ENCODE measurements at regions of chr1 and their contacts with region 1.

Region 1: GRCh38 chr1:243850452-243851256 is 611 bp upstream of the AKT3 start:
- DNase-seq: peak; percentile 89
- H3K4me3 Mint-ChIP-seq: peak overlapping the region; percentile 79
- H3K27ac Mint-ChIP-seq: peak overlapping the region; percentile 84
- H3K4me1 Mint-ChIP-seq: peaks cover 32% of the 10 kb centered on the region
- H3K27me3 Mint-ChIP-seq: no peaks in the 10 kb centered on the region

Region 2: DNA sequence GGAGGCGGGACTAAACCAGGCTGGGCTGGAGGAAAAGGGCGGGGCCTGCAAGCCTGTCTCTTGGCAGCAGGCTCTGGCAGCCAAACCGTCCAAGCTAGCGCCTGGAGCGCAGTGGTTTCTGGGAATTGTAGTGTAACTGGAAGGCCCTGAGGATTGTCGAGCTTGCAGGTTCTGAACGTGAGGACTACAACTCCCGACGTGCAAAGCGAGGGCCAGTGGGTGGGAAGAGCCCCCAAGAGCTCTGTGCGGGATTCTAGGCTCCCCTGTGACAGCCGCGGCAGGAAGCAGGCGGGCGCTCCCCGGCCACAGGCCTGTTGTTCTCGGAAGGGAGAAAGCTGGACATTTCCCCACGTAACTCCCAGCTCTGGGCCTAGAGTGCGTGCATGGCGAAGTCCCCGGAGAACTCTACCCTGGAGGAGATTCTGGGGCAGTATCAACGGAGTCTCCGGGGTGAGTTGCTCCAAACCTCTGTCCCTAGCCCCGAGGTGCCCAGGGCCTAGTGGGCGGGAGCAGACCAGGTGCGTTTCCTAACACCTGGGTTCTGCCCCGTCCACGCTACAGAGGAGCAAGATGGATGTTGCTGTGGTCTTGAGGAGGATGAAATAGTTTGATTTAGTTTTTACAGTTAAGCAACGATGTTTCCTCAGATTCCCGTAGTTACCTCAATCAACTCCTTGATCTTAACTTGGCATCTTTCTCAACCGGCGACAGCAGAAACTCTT is 594.7 kb before region 1 on chr1 and contains the start of gene SDCCAG8:
- CTCF ChIA-PET with region 1: no interaction called
- POLR2A ChIA-PET with region 1: no interaction called
- intact Hi-C with region 1: loop called (anchors 1 kb)
- DNase-seq: peak; percentile 97
- H3K4me3 Mint-ChIP-seq: peak within 1 kb of the TSS; percentile 95
- H3K27ac Mint-ChIP-seq: peak within 1 kb of the TSS; percentile 100
- H3K4me1 Mint-ChIP-seq: peaks cover 40% of the 10 kb centered on the region
- H3K27me3 Mint-ChIP-seq: peaks cover 3% of the 10 kb centered on the region
- total RNA-seq, gene SDCCAG8: 20.7 to 23.2 TPM

Region 3: GRCh38 chr1:243421784-243422183 is 428.9 kb before region 1 on chr1:
- CTCF ChIA-PET with region 1: no interaction called
- POLR2A ChIA-PET with region 1: no interaction called
- intact Hi-C with region 1: loop called (anchors 10 kb)
- DNase-seq: peak; percentile 77
- H3K4me3 Mint-ChIP-seq: peak overlapping the region; percentile 49
- H3K27ac Mint-ChIP-seq: peak overlapping the region; percentile 5
- H3K4me1 Mint-ChIP-seq: peaks cover 23% of the 10 kb centered on the region
- H3K27me3 Mint-ChIP-seq: no peaks in the 10 kb centered on the region

Region 4: DNA sequence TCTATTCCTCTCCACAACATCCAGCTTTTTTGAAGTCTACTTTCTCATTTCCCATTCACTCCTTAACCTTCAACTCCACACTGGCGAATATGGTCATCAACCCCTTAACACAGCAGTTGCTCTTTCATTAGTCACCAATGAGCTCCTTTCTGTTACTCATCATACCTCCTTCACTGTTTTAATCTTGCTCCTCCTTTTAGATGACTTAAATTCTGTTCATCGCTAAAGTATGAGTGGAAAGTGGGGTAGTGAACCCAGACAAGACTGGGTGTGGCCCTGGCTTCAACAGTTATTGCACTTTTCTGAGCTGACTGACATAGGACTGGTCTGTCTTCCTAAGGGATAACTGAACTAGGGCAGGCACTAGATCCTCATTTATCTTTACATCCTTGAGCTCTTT is 51.9 kb before region 1 on chr1:
- CTCF ChIA-PET with region 1: no interaction called
- POLR2A ChIA-PET with region 1: no interaction called
- intact Hi-C with region 1: no loop called
- DNase-seq: peak; percentile 17
- H3K4me3 Mint-ChIP-seq: no peak overlapping the region
- H3K27ac Mint-ChIP-seq: no peak overlapping the region
- H3K4me1 Mint-ChIP-seq: peaks cover 35% of the 10 kb centered on the region
- H3K27me3 Mint-ChIP-seq: no peaks in the 10 kb centered on the region

Region 5: DNA sequence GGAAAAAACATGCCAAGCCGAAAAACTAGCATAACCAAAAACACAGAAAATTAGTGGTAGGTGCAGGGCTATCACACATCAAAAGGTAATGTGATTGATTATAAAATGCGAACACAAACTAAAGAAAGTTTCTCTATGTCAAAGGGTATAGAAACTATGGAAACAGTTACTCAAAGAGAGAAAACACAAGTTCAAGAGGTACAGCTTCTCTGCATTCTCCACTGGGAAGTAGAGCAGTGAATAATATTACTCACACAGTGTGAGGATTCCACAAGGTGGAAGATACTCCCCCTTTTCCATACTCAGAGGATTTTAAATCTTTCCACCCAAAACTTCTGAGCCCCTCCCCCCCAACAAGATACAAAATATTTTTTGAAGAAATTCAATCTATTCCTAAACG is 19.2 kb before region 1 on chr1:
- CTCF ChIA-PET with region 1: no interaction called
- POLR2A ChIA-PET with region 1: no interaction called
- intact Hi-C with region 1: loop called (anchors 2 kb)
- DNase-seq: no peak
- H3K4me3 Mint-ChIP-seq: no peak overlapping the region
- H3K27ac Mint-ChIP-seq: no peak overlapping the region
- H3K4me1 Mint-ChIP-seq: peaks cover 34% of the 10 kb centered on the region
- H3K27me3 Mint-ChIP-seq: no peaks in the 10 kb centered on the region

Region 6: GRCh38 chr1:243917177-243917862 is 66.7 kb after region 1 on chr1:
- CTCF ChIA-PET with region 1: no interaction called
- POLR2A ChIA-PET with region 1: no interaction called
- intact Hi-C with region 1: loop called (anchors 5 kb)
- DNase-seq: peak; percentile 32
- H3K4me3 Mint-ChIP-seq: peak overlapping the region; percentile 69
- H3K27ac Mint-ChIP-seq: no peak overlapping the region
- H3K4me1 Mint-ChIP-seq: peaks cover 18% of the 10 kb centered on the region
- H3K27me3 Mint-ChIP-seq: peaks cover 41% of the 10 kb centered on the region

Region 7: DNA sequence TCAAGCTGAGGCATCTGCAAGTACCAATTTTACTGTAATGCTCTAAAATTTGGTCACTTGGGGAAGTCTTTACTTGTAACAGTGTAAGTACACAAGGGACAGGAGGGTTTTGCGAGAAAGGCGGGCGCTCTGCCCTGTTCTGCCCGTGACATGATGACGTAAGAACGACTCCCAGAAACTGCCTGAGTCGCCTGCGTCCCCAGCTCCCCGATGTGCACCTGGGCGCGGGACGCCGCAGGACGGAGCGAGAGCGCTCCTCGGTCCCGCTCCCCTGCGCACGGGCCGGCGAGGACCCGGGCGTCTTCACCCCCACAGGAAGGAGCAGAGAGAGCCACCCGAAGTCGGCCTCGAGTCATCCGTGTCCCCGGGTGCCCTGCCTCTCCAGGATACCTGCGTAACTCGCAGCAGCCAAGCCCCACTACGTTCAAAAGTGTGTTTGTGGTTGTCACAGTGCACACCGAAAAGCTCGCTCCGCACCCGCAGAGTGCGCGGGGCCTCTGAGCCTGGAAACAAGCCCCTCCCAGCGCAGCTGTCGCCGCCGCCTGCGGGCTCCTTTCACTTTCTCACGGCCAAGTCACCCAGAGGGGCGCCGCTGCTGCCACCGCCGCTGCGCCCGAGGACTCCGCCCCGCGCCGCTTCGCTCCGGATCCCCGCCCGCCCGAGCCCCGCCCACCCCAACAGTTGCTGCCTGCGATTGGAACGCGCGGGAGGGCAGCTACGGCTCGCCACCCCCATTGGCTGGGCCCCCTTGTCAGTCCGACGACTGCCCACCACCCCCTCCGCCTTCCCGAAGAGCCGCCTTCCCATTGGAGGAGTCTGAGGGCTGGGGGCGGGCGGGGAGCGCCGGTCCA is 197.2 kb after region 1 on chr1:
- CTCF ChIA-PET with region 1: no interaction called
- POLR2A ChIA-PET with region 1: interaction called, 3 read pairs
- intact Hi-C with region 1: loop called (anchors 1 kb)
- DNase-seq: peak; percentile 98
- H3K4me3 Mint-ChIP-seq: peak overlapping the region; percentile 94
- H3K27ac Mint-ChIP-seq: peak overlapping the region; percentile 97
- H3K4me1 Mint-ChIP-seq: peaks cover 41% of the 10 kb centered on the region
- H3K27me3 Mint-ChIP-seq: no peaks in the 10 kb centered on the region

Region 8: GRCh38 chr1:244451951-244452795 is 601.5 kb after region 1 on chr1:
- CTCF ChIA-PET with region 1: no interaction called
- POLR2A ChIA-PET with region 1: no interaction called
- intact Hi-C with region 1: loop called (anchors 2 kb)
- DNase-seq: peak; percentile 99
- H3K4me3 Mint-ChIP-seq: peak overlapping the region; percentile 96
- H3K27ac Mint-ChIP-seq: peak overlapping the region; percentile 97
- H3K4me1 Mint-ChIP-seq: peaks cover 45% of the 10 kb centered on the region
- H3K27me3 Mint-ChIP-seq: no peaks in the 10 kb centered on the region

Measured in activated CD4-positive, alpha-beta memory T cell treated with anti-CD3 and anti-CD28 coated beads for 36 hours (primary cell).